Panc1 (cell line): ENCODE measurements at regions of chr7 and their contacts with region 1.

Region 1: DNA sequence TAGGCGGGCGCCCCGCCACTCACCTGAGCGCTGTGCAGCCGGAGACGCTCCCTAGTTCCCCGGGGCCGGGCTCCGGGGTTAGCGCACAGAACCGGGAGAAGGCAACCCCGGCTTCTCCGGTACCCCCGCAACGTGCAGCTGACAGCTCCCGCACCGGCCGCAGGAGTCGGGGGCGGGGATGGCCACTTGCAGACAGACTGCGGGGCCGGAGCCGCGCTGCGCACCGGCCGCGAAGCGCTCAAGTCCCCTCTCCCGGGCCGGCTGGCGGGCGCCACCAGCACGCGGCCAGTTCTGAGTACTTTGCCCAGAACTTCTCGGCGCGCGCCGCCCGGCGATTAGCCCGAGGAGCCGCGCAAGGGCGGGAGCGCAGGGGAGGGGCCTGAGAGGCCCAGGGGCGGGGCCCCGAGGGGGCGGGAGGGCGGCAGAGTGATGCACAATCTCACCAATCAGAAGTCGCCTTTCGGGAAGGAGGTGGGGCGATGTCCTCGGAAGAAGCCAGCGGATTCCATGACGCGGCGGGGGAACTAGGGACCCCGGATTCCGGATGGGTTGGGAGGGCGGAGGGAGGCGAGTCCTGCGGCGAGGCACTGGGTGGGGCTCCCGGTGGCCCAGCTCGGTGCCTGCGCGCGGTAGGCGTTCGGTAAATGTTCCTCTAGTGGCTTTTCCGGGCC is at the start of gene OSBPL3:
- DNase-seq: peak; percentile 57
- ATAC-seq: peak; percentile 91
- H3K4me3 ChIP-seq: peak within 1 kb of the TSS; percentile 74 to 79
- H3K27ac ChIP-seq: peak within 1 kb of the TSS; percentile 75
- H3K4me1 ChIP-seq: peaks cover 6% of the 10 kb centered on the region; the same call in 1 of the 2 replicates
- H3K27me3 ChIP-seq: peaks cover 12% of the 10 kb centered on the region
- CTCF ChIP-seq: no peak
- total RNA-seq, gene OSBPL3: 9.2 TPM

Region 2: DNA sequence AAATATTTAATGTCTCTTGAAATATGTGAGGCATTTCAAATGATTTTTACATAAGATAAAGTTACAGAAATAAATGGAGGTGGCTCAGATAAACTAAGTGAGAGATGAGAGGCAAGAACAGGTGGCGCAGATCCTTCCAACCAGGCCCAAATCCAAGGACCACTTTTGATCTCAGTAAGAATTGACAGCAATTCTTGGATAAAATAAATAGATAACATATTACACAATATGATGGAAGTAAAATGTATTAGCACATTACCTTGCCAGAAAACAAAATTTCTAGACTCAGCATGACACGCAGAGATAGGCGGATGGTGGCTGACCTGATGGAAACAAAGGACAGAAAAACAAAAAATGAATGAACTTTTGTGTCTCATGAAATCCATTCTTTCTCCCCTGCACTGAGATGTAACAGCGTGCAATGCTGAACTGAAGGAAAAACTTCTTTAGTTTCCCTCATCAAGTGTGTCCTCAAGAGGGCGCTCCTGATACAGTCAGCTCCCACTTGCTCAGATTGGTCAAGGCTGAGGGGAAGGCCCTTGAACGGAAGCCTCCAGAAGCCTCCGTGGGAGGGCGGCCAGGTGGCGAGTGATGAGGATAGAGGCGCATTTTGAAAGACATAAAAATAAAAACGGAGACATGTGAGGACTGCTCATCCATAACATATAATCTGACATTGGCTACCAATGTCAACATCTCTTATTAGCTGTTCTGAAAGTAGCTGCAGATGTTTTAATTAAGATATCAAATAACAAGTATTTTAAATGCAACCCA is 159.9 kb before region 1 on chr7:
- CTCF ChIA-PET with region 1: interaction called, 10 read pairs
- POLR2A ChIA-PET with region 1: no interaction called
- in situ Hi-C with region 1: no loop called
- intact Hi-C with region 1: loop called (anchors 5 kb)
- DNase-seq: peak; percentile 82
- ATAC-seq: peak; percentile 91
- H3K4me3 ChIP-seq: no peak overlapping the region
- H3K27ac ChIP-seq: no peak overlapping the region
- H3K4me1 ChIP-seq: peaks cover 11% of the 10 kb centered on the region; the same call in 1 of the 2 replicates
- H3K27me3 ChIP-seq: no peaks in the 10 kb centered on the region
- CTCF ChIP-seq: peak; percentile 95

Region 3: GRCh38 chr7:25037325-25037724 is 57.3 kb after region 1 on chr7:
- CTCF ChIA-PET with region 1: interaction called, 11 read pairs
- POLR2A ChIA-PET with region 1: no interaction called
- in situ Hi-C with region 1: no loop called
- intact Hi-C with region 1: no loop called
- DNase-seq: no peak
- ATAC-seq: no peak
- H3K4me3 ChIP-seq: no peak overlapping the region
- H3K27ac ChIP-seq: no peak overlapping the region
- H3K4me1 ChIP-seq: no peaks in the 10 kb centered on the region
- H3K27me3 ChIP-seq: no peaks in the 10 kb centered on the region
- CTCF ChIP-seq: no peak